Activated CD4-positive, alpha-beta memory T cell treated with anti-CD3 and anti-CD28 coated beads for 36 hours (primary cell): ENCODE measurements at regions of chr11 and their contacts with region 1.

Region 1: GRCh38 chr11:64240394-64241174 is at the start of gene FKBP2:
- DNase-seq: peak; percentile 98
- H3K4me3 Mint-ChIP-seq: peak within 1 kb of the TSS; percentile 89
- H3K27ac Mint-ChIP-seq: peak within 1 kb of the TSS; percentile 98
- H3K4me1 Mint-ChIP-seq: peaks cover 37% of the 10 kb centered on the region
- H3K27me3 Mint-ChIP-seq: no peaks in the 10 kb centered on the region
- total RNA-seq, gene FKBP2: 28.7 to 34.9 TPM

Region 2: DNA sequence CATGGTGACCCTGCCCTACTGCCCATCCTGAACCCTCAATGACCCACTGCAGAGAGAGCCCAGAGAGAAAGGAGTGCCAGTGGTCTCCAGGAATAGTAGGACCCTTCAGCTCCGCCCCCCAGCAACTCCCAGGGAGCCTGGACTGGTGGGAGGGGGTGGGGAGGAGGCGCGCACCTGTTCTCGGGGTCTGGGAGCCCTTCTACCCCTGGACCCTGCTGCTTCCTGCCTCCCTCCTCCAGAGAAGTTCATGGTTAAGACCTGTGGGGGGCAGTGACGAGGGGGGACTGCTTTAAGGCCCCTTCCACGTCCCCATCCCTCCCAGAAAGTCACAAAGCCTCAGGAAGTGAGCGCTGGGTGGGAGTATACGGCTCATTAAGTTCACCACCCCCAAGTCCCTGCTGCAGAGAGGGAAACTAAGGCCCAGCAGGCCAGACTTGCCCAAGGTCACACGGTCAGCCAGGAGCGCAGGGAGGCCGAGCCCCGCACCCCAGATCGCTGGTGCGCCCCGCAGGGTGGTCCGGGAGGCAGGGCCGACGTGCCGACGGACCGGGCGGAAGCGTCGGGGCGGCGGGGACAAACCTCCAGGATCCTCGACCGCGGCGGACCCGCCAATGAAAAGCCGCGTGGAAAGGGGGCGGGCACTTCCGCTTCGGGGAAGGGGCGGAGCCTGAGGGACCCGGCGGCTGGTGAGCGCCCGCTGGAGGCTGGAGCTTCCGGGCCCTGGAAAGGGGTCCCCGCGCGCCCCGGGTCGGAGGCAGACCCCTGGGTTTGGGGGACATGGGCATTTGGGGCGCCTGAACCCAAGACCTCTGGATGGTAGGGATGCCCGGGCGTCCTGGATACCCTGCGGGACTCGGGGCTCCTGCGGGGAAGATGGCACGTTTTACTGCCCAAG is 14.7 kb before region 1 on chr11 and contains the starts of genes NUDT22 and TRPT1:
- CTCF ChIA-PET with region 1: interaction called, 6 read pairs
- POLR2A ChIA-PET with region 1: interaction called, 8 read pairs
- intact Hi-C with region 1: loop called (anchors 1 kb)
- DNase-seq: peak; percentile 95
- H3K4me3 Mint-ChIP-seq: peak within 1 kb of the TSS; percentile 88
- H3K27ac Mint-ChIP-seq: peak within 1 kb of the TSS; percentile 84
- H3K4me1 Mint-ChIP-seq: peaks cover 28% of the 10 kb centered on the region
- H3K27me3 Mint-ChIP-seq: no peaks in the 10 kb centered on the region
- total RNA-seq, gene NUDT22: 69.8 to 79.8 TPM
- total RNA-seq, gene TRPT1: 30.4 to 35.6 TPM

Region 3: DNA sequence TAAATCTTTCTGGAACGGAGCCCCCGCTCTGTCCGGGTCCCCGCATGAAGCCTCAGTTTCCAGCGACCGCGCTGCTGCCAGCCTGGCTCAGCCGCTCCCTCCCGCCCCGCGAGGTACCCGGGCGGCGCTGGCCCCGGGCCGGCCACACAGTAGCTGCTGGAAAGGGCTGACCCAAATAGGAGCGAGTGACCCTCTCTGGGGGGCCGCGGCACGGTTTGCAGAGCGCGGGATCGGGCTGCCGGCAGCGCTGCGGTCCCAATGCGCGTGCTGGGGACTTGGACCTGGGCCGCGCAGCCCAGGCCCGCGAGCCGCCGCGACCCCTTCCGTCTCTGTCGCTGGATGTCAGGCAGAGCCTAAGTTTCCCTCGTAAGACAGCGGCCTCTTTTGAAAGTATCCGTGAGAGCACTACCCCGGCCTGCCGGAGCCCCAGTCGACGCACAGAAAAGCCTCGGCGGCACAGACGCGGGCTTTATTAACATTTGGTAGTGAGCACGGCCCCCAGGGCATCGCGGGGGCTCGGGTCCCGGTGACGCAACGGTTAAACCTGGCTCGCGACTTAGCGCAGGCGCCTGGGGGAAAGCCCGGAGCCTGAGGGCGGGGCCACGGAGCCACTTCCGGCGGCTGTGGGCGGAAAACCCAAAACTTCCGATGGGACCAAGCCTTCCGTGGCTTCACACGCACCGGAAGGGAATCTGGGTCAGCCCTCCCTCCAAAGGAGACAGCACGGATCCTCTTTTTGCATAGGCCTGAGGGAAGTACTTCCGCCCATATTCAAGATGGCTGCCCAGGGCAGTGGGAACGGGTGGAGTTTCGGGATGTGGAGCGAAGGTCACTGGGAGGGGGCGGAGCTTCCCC is 29.0 kb after region 1 on chr11:
- CTCF ChIA-PET with region 1: interaction called, 5 read pairs
- POLR2A ChIA-PET with region 1: interaction called, 22 read pairs
- intact Hi-C with region 1: loop called (anchors 2 kb)
- DNase-seq: peak; percentile 99
- H3K4me3 Mint-ChIP-seq: peak overlapping the region; percentile 89
- H3K27ac Mint-ChIP-seq: peak overlapping the region; percentile 95
- H3K4me1 Mint-ChIP-seq: peaks cover 15% of the 10 kb centered on the region
- H3K27me3 Mint-ChIP-seq: no peaks in the 10 kb centered on the region

Region 4: GRCh38 chr11:64284048-64284961 is 43.7 kb after region 1 on chr11 and contains the start of gene BAD:
- CTCF ChIA-PET with region 1: interaction called, 3 read pairs
- POLR2A ChIA-PET with region 1: interaction called, 6 read pairs
- intact Hi-C with region 1: loop called (anchors 2 kb)
- DNase-seq: peak; percentile 96
- H3K4me3 Mint-ChIP-seq: peak within 1 kb of the TSS; percentile 83
- H3K27ac Mint-ChIP-seq: peak within 1 kb of the TSS; percentile 91
- H3K4me1 Mint-ChIP-seq: peaks cover 14% of the 10 kb centered on the region
- H3K27me3 Mint-ChIP-seq: no peaks in the 10 kb centered on the region
- total RNA-seq, gene BAD: 23.7 to 24.2 TPM